ENCODE measurements at regions of chr13 and their contacts with region 1.

Region 1: DNA sequence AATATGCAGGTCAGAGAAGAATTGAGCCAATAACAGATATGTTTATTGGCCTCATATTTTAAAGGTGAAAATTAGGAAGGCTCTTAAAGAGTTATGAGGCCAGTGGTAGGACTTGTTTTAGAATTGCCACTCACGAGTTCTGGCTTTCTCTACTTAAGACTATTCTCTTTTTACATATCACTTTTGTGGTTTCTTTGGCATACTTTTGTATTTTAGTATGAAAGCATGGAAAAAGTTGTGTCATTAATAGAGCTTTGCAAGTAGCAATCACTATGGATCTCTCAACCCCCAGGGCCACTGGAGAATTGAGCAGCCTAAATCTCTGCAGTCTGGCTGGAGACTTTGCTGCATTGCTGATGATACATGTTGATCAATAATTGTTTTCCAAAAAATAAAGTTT is 64.6 kb upstream of the SOX21 start:
- DNase-seq: no peak
- ATAC-seq: no peak
- H3K4me3 ChIP-seq: no peak overlapping the region
- H3K27ac ChIP-seq: no peak overlapping the region
- H3K4me1 ChIP-seq: peaks cover 25% of the 10 kb centered on the region
- H3K27me3 ChIP-seq: no peaks in the 10 kb centered on the region
- CTCF ChIP-seq: no peak

Region 2: GRCh38 chr13:94967183-94968039 is 190.5 kb after region 1 on chr13:
- CTCF ChIA-PET with region 1: no interaction called
- POLR2A ChIA-PET with region 1: interaction called, 25 read pairs
- intact Hi-C with region 1: no loop called
- DNase-seq: peak; percentile 34
- ATAC-seq: peak; percentile 87
- H3K4me3 ChIP-seq: peak overlapping the region; percentile 66
- H3K27ac ChIP-seq: no peak overlapping the region
- H3K4me1 ChIP-seq: peaks cover 10% of the 10 kb centered on the region; the same call in 1 of the 2 replicates
- H3K27me3 ChIP-seq: no peaks in the 10 kb centered on the region
- CTCF ChIP-seq: no peak

Region 3: DNA sequence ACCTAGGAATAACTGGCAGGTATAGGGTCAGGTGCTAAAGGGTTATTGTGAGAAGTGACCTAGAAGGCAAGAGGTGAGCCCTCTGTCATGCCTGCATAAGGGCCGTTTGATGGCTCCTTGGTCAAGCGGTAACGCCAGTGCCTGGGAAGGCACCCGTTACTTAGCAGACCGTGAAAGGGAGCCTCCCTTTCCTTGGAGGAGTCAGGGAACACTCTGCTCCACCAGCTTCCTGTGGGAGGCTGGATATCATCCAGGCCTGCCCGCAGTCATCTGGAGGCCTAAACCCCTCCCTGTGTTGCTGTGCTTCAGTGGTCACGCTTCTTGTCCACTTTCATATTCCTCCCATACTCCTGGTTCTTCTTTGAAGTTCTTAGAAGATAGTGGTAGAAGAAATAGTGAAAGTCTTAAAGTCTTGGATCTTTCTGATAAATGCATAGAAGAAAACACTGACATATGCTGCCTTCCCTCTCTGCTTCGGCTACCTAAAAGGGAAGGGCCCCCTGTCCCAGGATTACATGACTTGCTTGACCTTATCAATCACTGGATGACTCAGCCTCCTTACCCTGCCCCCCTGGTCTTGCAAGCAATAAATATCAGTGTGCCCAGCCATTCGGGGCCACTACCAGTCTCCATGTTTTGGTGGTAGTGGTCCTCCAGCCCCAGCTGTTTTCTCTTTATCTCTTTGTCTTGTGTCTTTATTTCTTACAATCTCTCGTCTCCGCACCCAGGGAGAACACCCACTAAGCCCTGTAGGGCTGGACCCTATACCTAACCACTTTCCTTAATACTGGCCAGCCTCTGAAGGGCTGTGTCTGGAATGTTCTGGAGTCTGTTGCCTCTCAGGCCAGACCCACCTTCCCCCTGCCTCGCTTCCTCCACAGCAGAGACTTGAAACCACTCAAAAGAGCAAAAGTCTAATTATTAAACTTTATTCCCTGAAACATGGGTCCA is 540.4 kb after region 1 on chr13:
- CTCF ChIA-PET with region 1: no interaction called
- POLR2A ChIA-PET with region 1: no interaction called
- intact Hi-C with region 1: no loop called
- DNase-seq: no peak
- ATAC-seq: no peak
- H3K4me3 ChIP-seq: no peak overlapping the region
- H3K27ac ChIP-seq: no peak overlapping the region
- H3K4me1 ChIP-seq: peaks cover 10% of the 10 kb centered on the region; the same call in 1 of the 2 replicates
- H3K27me3 ChIP-seq: no peaks in the 10 kb centered on the region
- CTCF ChIP-seq: no peak